PC-9 (cell line): ENCODE measurements at regions of chr9 and their contacts with region 1.

Region 1: DNA sequence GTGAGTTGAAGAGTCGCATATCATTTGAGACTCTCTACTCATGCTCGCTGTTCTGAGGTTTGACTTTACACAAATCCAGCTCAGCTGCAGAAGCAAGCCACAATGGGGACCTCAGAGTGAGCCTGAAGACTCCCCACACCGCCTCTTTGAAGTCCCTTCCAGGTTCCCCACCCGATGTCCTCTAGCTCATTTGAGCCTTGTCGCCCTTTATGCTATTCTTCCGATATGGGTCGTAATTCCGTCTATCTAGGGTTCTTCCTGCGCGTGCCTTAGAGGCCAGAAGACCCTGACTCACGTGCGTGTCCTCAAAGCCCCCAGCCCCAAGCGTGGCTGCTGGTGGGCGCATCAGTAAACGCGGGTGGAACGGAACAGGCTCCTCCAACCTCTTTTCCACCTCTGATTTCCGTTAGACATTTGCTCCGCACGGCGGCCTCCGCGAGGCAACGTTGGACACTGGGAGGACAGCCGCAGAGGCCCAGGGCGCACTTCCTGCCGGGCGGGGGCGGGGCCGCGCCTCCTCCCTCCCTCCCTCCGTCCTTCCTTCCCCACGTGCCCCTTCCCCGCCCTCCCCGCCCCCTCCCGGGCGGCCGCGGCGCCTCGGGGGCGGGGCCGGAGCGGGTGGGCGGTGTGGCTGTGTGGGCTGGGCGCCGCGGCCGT is at the start of gene SNX30:
- DNase-seq: peak; percentile 69 to 95
- H3K4me3 ChIP-seq: peak within 1 kb of the TSS; percentile 98
- H3K27ac ChIP-seq: peak within 1 kb of the TSS; percentile 47
- H3K4me1 ChIP-seq: peaks cover 47% of the 10 kb centered on the region
- H3K27me3 ChIP-seq: no peaks in the 10 kb centered on the region
- CTCF ChIP-seq: no peak
- total RNA-seq, gene SNX30: 32.5 and 33.1 TPM in 2 replicates

Region 2: DNA sequence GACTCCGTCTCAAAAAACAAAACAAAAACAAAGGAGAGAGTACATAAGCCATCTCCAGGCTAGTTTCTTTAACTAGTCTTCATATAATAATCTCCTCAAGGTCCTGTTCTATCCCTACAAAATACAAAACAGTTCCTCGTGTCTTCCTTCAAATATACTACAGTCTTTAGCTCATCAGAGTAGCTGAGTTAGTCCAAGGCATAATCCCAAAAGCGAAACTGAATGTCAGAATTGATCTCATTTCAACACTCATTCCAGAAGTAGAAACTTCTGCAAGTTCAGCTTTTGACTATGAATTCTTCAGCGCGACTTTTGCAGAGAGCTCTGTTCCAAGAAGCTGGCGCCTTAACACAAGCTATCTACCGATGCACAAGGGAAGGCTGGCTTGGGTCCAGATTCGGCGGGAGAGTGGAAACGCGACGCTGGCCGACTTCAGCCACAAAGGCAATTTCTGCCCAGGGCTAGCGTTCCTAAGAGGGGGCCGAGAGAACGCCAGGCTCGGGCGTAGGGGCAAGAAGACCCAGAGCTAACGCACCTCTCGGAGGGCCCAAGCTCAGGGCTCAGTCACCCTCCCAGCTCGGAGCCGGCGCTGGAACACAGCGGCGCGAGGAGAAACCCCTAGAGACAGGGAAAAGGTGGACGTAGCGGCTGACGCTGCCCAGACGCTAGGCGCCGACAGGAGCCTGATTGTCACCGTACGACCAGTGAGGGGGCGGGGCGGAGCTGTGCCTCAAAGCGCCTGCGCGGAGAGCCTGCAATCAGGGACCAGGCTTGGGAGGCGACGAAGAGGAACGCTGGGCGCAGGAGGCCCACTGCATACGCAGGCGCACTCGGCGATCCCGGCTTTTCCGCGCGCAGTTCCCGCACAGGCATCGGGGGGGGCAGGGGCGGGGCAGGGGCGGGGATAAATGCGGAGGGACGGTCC is 370.8 kb before region 1 on chr9:
- CTCF ChIA-PET with region 1: interaction called, 8 read pairs
- POLR2A ChIA-PET with region 1: no interaction called
- intact Hi-C with region 1: loop called (anchors 10 kb)
- DNase-seq: peak; percentile 92 to 100
- H3K4me3 ChIP-seq: peak overlapping the region; percentile 95
- H3K27ac ChIP-seq: peak overlapping the region; percentile 75
- H3K4me1 ChIP-seq: peaks cover 28% of the 10 kb centered on the region
- H3K27me3 ChIP-seq: no peaks in the 10 kb centered on the region
- CTCF ChIP-seq: no peak

Region 3: DNA sequence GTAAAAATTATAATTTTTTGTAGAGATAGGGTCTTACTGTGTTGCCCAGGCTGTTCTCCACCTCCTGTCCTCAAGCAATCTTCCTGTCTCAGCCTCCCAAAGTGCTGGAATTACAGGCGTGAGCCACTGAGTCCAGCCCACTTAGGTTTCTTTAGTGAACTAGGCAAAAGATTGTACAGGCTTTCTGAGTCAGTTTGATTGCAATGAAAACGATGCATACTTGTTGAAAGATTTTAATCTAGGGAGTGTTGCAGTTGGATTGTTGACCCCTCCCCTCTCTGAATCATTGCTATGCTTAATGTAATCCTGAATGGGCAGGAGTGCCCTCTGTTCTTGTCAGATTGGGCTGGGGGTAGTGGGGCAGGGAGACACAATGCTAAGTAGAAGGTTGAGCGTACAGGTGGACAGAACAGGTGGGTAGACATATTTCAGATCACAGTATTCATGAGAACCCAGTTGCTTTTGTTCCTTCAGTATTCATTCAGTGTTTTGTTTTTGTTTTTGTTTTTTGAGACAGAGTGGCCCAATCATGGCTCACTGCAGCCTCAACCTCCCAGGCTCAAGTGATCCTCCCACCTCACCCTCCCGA is 193.6 kb before region 1 on chr9:
- CTCF ChIA-PET with region 1: no interaction called
- POLR2A ChIA-PET with region 1: no interaction called
- intact Hi-C with region 1: loop called (anchors 5 kb)
- DNase-seq: peak; percentile 64 to 74
- H3K4me3 ChIP-seq: no peak overlapping the region
- H3K27ac ChIP-seq: peak overlapping the region; percentile 49
- H3K4me1 ChIP-seq: peaks cover 27% of the 10 kb centered on the region
- H3K27me3 ChIP-seq: no peaks in the 10 kb centered on the region
- CTCF ChIP-seq: no peak

Region 4: GRCh38 chr9:112793213-112793810 is 43.1 kb after region 1 on chr9:
- CTCF ChIA-PET with region 1: no interaction called
- POLR2A ChIA-PET with region 1: no interaction called
- intact Hi-C with region 1: loop called (anchors 1 kb)
- DNase-seq: peak in 1 of 2 experiments; percentile 71
- H3K4me3 ChIP-seq: no peak overlapping the region
- H3K27ac ChIP-seq: no peak overlapping the region
- H3K4me1 ChIP-seq: no peaks in the 10 kb centered on the region
- H3K27me3 ChIP-seq: no peaks in the 10 kb centered on the region
- CTCF ChIP-seq: peak; percentile 78

Region 5: DNA sequence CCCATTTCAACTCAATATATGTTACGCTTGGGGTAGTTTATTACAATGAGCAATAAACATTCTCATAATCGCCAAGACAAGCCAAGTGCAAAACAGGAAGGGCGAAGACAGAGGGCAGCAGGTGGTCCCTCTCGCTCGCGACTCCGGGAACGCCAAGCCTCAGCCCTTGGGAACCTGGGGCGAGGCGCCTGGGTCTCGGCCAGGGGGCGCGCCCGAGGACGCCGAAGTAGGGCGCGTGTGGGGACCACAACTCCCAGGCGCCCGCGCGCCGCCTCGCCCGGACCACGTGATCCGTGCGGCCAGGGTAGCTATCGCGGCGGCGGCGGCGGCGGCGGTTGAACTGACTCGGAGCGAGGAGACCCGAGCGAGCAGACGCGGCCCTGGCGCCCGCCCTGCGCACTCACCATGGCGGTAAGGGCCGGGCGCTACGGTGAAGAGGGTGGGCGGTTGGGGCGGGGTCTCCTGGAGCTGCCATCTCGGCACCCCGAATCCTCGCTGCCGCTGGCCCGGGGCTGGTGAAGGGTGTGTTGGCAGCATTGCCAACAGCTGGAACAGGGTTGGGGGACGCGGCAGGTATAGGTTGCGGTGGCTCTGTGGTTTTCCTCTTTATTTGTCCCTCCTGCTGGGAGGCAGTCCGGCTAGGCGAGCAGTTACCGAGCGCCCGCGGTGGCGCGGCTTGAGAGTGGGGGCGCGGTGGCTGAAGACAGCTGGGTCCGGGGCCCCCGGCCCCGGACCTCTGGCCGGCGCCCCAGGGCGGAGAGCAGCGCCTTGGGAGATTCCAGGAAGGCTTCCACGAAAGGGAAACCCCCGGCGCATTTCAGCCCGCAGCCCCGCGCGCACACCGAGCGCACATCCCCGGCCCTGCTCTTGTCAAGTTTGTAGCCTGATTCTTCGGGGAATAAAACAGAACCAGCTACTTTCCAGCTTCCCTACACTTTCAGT is 400.7 kb after region 1 on chr9 and contains the start of gene SLC31A2:
- CTCF ChIA-PET with region 1: no interaction called
- POLR2A ChIA-PET with region 1: interaction called, 11 read pairs
- intact Hi-C with region 1: no loop called
- DNase-seq: peak; percentile 72 to 93
- H3K4me3 ChIP-seq: peak within 1 kb of the TSS; percentile 77
- H3K27ac ChIP-seq: no peak within 1 kb of the TSS
- H3K4me1 ChIP-seq: peaks cover 31% of the 10 kb centered on the region
- H3K27me3 ChIP-seq: no peaks in the 10 kb centered on the region
- CTCF ChIP-seq: no peak; the same call in 1 of the 2 replicates
- total RNA-seq, gene SLC31A2: 15.1 and 16.5 TPM in 2 replicates